Sciatic nerve (tissue), 2 donors: ENCODE measurements at regions of chr2 and their contacts with region 1.

Region 1: DNA sequence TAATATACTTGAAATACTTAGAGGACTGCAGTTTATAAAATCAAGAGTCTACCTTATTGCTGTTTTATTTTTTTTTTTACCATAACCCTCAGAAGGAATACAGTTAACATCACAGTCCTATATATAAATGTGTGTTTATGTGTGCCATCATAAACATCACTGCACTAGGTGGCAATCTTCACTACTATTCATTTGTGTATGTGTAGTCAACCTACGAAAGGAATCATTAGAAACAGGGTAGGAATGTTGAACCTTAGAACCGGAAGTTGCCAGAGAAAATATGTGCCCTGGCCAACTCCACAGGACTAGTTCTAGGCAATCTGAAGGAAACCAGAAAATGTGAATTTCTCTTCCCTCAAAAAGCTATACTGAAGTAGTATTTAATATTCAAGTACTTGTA is 3.4 kb downstream of the GEN1 start:
- DNase-seq: no peak
- ATAC-seq: no peak

Region 2: GRCh38 chr2:16494836-16495508 is 1262.3 kb before region 1 on chr2:
- intact Hi-C with region 1: loop called (anchors 5 kb)
- DNase-seq: no peak
- ATAC-seq: no peak

Region 3: DNA sequence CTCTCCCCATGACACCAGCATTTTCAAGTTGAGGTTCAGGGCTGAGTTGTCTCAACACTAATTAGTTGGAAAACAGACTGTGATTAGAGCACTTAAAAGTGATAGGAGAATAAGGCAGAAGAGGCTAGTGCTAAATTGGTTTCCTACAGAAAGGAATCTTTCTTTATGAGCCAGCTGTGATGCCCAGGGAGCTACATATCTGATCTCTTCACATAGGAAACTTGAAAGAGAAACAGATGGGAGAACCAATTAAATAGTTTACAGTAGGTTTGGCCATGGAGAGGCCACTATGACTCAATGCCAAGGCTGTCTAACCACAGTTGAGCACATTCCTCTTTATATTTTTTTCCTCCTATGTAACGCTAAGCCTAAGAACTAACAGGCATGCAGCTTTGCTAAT is 673.4 kb before region 1 on chr2:
- intact Hi-C with region 1: no loop called
- DNase-seq: no peak
- ATAC-seq: no peak